Naive thymus-derived CD4-positive, alpha-beta T cell (primary cell): ENCODE measurements at regions of chr11 and their contacts with region 1.

Region 1: DNA sequence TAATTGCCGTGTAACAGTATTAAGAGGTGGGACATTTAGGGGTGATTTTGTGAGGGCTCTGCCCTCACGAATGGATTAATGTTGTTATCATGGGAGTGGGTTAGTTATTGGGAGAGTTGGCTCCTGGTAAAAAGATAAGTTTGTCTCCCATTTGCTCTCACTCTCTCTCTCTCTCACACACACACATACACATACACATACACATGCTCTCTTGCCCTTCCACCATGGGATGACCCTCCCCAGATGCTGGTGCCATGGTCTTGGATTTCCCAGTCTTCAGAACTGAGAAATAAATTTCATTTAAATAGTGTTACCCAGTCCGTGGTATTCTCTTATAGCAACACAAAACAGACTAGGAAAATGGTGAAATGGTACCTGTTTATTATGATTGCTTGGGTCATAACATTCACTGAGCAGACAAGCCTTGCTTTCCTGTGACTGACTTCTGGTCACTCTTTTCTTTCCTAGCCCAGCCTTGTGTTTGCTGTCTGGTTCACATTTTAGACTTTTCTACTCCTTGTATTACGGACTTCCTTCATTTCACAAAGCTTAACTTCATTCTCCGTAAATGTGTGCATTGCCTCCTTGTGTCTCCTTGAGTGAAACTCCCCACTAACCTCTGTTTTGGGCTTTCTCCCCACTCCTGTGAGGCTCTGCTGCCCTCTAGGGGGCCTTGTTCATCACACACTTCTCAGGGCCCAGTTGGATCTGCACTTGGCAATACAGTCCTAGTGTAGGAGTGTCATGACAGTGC is 206.5 kb upstream of the CTSC start:
- DNase-seq: peak; percentile 47 to 82 (median 75)
- ATAC-seq: peak; percentile 98
- H3K4me3 ChIP-seq: no peak overlapping the region
- H3K4me3 Mint-ChIP-seq: peak overlapping the region in 3 of 10 donors; percentile 11 to 51 (median 27)
- H3K27ac ChIP-seq: no peak overlapping the region
- H3K27ac Mint-ChIP-seq: peak overlapping the region in 3 of 9 donors; percentile 26 to 50 (median 40)
- H3K4me1 ChIP-seq: peaks cover 0 to 4% of the 10 kb centered on the region in 2 donors
- H3K4me1 Mint-ChIP-seq: peaks cover 4 to 10% (median 6%) of the 10 kb centered on the region in 7 donors
- H3K27me3 ChIP-seq: no peaks in the 10 kb centered on the region
- H3K27me3 Mint-ChIP-seq: peaks cover 0 to 6% (median 0%) of the 10 kb centered on the region in 5 donors

Region 2: DNA sequence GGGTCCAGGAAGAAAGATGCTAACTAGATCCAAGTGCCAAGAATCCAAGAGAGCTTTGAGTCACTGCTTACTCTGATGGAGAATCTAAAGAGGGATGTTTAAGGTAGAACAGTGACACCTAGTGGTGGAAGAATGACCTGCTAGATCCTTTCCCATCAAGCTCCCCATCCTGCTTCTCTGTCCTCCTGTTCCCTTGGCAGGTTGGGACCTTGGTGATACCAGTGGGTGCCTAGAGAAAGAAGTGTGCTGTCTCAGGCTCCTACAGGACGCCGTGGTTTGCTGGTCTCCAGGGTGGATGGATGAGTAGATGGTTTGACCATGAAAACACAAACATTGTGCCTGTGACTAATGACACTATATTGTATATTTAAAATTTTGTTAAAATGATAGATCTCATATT is 1122.7 kb before region 1 on chr11:
- CTCF ChIA-PET with region 1: no interaction called
- POLR2A ChIA-PET with region 1: no interaction called
- intact Hi-C with region 1: loop called in 1 of 2 experiments (anchors 2 kb)
- DNase-seq: peak in 7 of 9 donors; percentile 12 to 50 (median 27)
- ATAC-seq: peak; percentile 61
- H3K4me3 ChIP-seq: no peak overlapping the region
- H3K4me3 Mint-ChIP-seq: no peak overlapping the region
- H3K27ac ChIP-seq: no peak overlapping the region
- H3K27ac Mint-ChIP-seq: no peak overlapping the region
- H3K4me1 ChIP-seq: no peaks in the 10 kb centered on the region
- H3K4me1 Mint-ChIP-seq: no peaks in the 10 kb centered on the region
- H3K27me3 ChIP-seq: no peaks in the 10 kb centered on the region
- H3K27me3 Mint-ChIP-seq: peaks cover 0 to 12% (median 0%) of the 10 kb centered on the region in 5 donors

Region 3: DNA sequence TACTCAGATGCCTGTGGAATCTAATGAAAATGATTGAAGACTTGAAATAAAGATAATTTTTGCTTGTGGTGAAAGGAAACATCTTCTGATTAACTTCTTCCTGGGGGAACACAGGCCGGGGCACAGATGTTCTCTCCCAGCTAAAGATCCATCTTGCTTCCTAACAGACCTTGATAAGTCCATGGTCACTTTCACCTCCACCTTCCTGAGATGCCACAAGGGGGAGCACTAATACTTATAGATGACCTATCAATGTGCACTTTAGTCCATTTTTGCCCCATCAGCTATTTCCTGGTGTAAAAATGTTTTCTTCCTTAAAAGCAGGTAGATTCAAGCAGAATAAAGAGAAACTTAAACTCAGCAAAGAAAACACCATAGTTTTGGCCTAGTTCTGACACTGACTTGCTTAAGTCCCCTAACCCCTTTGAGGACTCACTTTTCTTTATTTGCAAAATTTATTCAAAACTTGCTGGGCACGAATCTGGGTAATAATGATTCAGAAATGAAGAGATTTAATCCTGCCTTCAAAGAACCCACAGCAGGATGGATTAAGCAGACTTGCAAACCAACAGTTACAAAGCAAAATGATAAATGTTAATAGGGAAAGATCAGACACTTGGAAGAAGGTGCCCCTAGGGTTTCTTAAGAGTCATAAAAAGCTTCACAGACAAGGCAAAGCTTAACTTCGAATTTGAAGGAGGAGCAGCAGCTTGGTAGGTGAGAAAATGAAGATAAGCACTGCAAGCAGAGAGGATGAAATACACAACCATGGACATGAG is 527.5 kb before region 1 on chr11:
- CTCF ChIA-PET with region 1: interaction called, 28 read pairs
- POLR2A ChIA-PET with region 1: no interaction called
- intact Hi-C with region 1: loop called (anchors 1 kb)
- DNase-seq: peak in 8 of 9 donors; percentile 26 to 61 (median 52)
- ATAC-seq: peak; percentile 71
- H3K4me3 ChIP-seq: no peak overlapping the region
- H3K4me3 Mint-ChIP-seq: no peak overlapping the region
- H3K27ac ChIP-seq: no peak overlapping the region
- H3K27ac Mint-ChIP-seq: no peak overlapping the region
- H3K4me1 ChIP-seq: no peaks in the 10 kb centered on the region
- H3K4me1 Mint-ChIP-seq: no peaks in the 10 kb centered on the region
- H3K27me3 ChIP-seq: no peaks in the 10 kb centered on the region
- H3K27me3 Mint-ChIP-seq: peaks cover 0 to 7% (median 2%) of the 10 kb centered on the region in 5 donors

Region 4: GRCh38 chr11:88131764-88132470 is 412.2 kb before region 1 on chr11:
- CTCF ChIA-PET with region 1: no interaction called
- POLR2A ChIA-PET with region 1: no interaction called
- intact Hi-C with region 1: no loop called
- DNase-seq: no peak
- ATAC-seq: no peak
- H3K4me3 ChIP-seq: no peak overlapping the region
- H3K4me3 Mint-ChIP-seq: no peak overlapping the region
- H3K27ac ChIP-seq: no peak overlapping the region
- H3K27ac Mint-ChIP-seq: no peak overlapping the region
- H3K4me1 ChIP-seq: no peaks in the 10 kb centered on the region
- H3K4me1 Mint-ChIP-seq: no peaks in the 10 kb centered on the region
- H3K27me3 ChIP-seq: no peaks in the 10 kb centered on the region
- H3K27me3 Mint-ChIP-seq: peaks cover 0 to 8% (median 0%) of the 10 kb centered on the region in 5 donors

Region 5: DNA sequence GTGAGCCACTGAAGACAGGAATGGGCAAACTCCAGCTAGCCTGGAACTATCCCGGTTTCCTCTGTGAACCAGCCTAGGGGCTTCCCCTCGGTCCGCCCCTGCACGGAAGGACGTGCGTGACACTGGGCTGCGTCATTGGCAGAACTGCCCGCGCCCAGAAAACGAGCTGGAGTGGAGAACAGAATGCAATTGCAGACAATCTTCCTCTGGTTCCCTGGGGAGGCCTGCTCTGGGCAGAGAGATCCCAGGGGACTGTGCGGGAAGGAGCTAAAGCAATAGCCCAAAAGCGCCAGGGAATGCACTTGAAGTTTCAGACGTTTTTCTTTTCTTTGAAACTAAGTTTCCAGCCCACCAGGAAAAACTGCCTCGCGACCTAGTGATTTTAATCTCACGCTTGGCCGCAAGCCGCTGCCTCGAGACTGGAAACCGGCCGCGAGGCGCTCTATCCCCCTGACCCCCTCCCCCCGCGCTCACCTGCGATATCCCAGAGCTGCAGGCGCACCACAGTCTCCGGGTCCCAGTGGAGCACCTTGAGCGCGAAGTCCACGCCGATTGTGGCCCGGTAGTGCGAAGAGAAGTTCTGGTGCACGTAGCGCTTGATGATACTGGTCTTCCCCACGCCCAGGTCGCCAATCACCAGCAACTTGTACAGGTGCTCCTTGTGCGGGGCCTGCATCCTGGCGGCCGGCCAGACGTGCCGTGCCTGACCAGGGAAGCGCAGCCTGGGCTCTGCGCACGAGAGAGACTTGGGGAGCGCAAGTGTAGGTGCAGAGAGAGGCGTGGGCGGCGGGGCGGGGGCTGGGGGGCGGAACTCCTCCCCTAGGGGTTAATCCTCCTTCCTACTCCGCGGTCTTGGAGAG is 369.1 kb before region 1 on chr11 and contains the start of gene RAB38:
- CTCF ChIA-PET with region 1: interaction called, 3 read pairs
- POLR2A ChIA-PET with region 1: no interaction called
- intact Hi-C with region 1: loop called in 1 of 2 experiments (anchors 5 kb)
- DNase-seq: peak in 3 of 9 donors; percentile 1 to 63 (median 2)
- ATAC-seq: peak; percentile 75
- H3K4me3 ChIP-seq: peak within 1 kb of the TSS; percentile 45
- H3K4me3 Mint-ChIP-seq: peak within 1 kb of the TSS; percentile 50 to 85 (median 71)
- H3K27ac ChIP-seq: no peak within 1 kb of the TSS
- H3K27ac Mint-ChIP-seq: peak within 1 kb of the TSS in 2 of 9 donors; percentile 25 to 77
- H3K4me1 ChIP-seq: peaks cover 0 to 4% of the 10 kb centered on the region in 2 donors
- H3K4me1 Mint-ChIP-seq: peaks cover 0 to 47% (median 8%) of the 10 kb centered on the region in 7 donors
- H3K27me3 ChIP-seq: no peaks in the 10 kb centered on the region
- H3K27me3 Mint-ChIP-seq: peaks cover 0 to 9% (median 7%) of the 10 kb centered on the region in 5 donors
- total RNA-seq, gene RAB38: 0.21 to 1.9 (median 0.92) TPM in 4 of 5 experiments, not detected in the other

Region 6: DNA sequence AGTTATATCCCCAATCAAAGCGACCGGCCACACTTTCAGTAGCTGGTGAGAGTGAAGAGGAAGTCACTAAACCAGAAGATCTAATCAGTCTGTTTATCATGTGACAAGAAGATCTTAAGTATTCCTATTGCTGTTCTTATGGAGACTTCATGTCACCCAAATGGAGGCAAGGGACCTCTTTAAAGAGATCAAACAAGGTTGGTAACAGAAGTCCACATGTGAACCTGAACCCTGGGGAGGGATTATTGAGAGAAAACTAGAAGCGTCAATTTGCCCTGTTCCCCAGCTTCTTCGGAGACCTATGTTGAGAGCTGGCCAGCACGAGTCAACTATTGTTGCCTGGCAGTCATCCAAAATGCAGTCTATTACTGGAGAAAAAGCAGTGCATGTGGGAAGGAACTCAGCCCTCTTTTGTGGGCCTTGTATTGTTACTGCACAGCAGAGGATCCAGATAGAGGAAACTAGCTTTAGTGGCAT is 129.7 kb before region 1 on chr11:
- CTCF ChIA-PET with region 1: no interaction called
- POLR2A ChIA-PET with region 1: no interaction called
- intact Hi-C with region 1: loop called in 1 of 2 experiments (anchors 5 kb)
- DNase-seq: peak in 6 of 9 donors; percentile 16 to 50 (median 38)
- ATAC-seq: peak; percentile 73
- H3K4me3 ChIP-seq: peak overlapping the region; percentile 18
- H3K4me3 Mint-ChIP-seq: peak overlapping the region; percentile 58 to 84 (median 73)
- H3K27ac ChIP-seq: peak overlapping the region; percentile 6
- H3K27ac Mint-ChIP-seq: peak overlapping the region in 7 of 9 donors; percentile 48 to 88 (median 74)
- H3K4me1 ChIP-seq: peaks cover 24 to 37% of the 10 kb centered on the region in 2 donors
- H3K4me1 Mint-ChIP-seq: peaks cover 27 to 61% (median 34%) of the 10 kb centered on the region in 7 donors
- H3K27me3 ChIP-seq: no peaks in the 10 kb centered on the region
- H3K27me3 Mint-ChIP-seq: no peaks in the 10 kb centered on the region

Region 7: DNA sequence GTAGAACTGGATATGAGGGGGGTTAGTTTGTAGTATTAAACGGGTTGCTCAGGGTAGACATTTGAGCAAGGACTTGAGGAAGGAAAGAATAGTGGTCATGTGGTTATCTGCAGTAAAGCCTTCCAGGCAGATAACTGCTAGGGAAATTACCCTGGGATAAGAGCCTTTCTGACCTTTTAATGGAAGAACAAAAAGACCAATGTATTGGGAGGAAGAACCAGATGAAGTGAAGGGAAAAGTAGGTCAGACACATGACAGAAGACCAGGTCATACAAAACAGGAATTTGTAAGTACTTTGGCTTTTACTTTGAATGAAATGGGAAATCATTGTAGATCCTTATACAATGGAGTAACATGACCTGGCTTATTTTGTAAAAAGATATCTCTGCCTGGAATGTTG is 35.4 kb after region 1 on chr11:
- CTCF ChIA-PET with region 1: no interaction called
- POLR2A ChIA-PET with region 1: no interaction called
- intact Hi-C with region 1: no loop called
- DNase-seq: no peak
- ATAC-seq: no peak
- H3K4me3 ChIP-seq: no peak overlapping the region
- H3K4me3 Mint-ChIP-seq: no peak overlapping the region
- H3K27ac ChIP-seq: no peak overlapping the region
- H3K27ac Mint-ChIP-seq: no peak overlapping the region
- H3K4me1 ChIP-seq: no peaks in the 10 kb centered on the region
- H3K4me1 Mint-ChIP-seq: peaks cover 0 to 7% (median 0%) of the 10 kb centered on the region in 7 donors
- H3K27me3 ChIP-seq: no peaks in the 10 kb centered on the region
- H3K27me3 Mint-ChIP-seq: peaks cover 0 to 10% (median 8%) of the 10 kb centered on the region in 5 donors